Transverse colon (tissue), 4 donors: ENCODE measurements at regions of chr2 and their contacts with region 1.

Region 1: DNA sequence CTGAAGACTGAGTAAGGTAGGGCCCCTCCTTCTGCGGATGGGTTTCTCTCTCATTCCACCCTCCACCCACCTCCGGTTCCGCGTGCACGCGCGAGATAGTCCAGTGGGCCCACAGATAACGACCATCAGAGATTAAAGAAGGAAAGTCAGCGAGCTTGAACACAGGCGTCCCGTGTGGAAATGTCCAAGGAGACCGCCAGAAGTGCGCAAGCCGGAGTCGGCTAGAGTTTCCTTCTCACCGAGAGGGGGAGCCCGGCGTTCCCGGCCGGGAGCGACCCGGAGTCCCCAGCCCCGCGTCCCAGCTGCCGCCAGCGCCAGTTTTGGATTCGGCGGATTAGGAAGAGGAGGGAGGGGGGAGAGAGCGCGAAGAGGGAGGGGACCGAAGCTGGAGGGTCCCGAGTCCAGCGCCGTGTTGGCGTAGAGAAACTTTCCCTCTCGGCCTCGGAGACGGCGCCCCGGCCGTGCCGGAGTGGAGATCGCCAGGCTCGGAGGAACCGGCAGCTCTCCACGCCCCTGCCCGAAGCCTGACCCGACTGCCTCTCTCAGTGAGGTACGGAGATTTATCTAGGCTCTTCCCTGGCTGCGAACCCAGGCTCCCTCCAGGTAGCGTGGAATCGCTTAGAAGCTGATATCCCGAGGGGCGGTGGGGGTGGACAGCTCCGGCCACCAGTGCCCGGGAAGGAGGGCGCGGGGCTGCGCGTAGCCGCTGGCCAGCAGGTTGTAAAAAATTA is at the start of gene GULP1:
- DNase-seq: peak; percentile 76
- H3K4me3 ChIP-seq: peak within 1 kb of the TSS; percentile 47 to 75 (median 66)
- H3K27ac ChIP-seq: peak within 1 kb of the TSS; percentile 84 to 96 (median 88)
- H3K4me1 ChIP-seq: peaks cover 5 to 27% (median 15%) of the 10 kb centered on the region in 4 donors
- H3K27me3 ChIP-seq: no peaks in the 10 kb centered on the region
- CTCF ChIP-seq: peak; percentile 58 to 71 (median 68)
- EP300 ChIP-seq: no peak
- POLR2A ChIP-seq: peak; percentile 12
- total RNA-seq, gene GULP1: 6.4 to 44.1 (median 25.4) TPM

Region 2: DNA sequence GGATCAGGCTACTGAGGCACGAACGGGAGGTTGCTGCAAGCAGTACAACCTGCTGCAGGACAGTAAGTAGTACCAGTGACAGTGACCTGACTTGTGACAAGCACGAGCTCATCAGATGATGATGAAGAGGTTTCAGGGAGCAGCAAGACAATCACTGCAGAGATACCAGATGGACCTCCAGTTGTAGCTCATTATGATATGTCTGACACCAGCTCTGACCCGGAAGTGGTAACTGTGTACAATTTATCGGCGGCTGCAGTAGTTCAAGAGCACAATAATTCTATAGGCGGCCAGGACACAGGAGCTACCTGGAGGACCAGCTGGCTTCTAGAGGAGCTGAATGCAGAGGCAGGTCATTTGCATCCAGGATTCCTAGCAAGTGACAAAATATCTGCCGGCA is 64.1 kb before region 1 on chr2:
- in situ Hi-C with region 1: no loop called
- intact Hi-C with region 1: no loop called
- DNase-seq: no peak
- H3K4me3 ChIP-seq: no peak overlapping the region
- H3K27ac ChIP-seq: no peak overlapping the region
- H3K4me1 ChIP-seq: no peaks in the 10 kb centered on the region
- H3K27me3 ChIP-seq: no peaks in the 10 kb centered on the region
- CTCF ChIP-seq: no peak
- EP300 ChIP-seq: no peak
- POLR2A ChIP-seq: no peak

Region 3: GRCh38 chr2:188506843-188507242 is 215.1 kb after region 1 on chr2:
- in situ Hi-C with region 1: no loop called
- intact Hi-C with region 1: loop called (anchors 5 kb)
- DNase-seq: no peak
- H3K4me3 ChIP-seq: no peak overlapping the region
- H3K27ac ChIP-seq: no peak overlapping the region
- H3K4me1 ChIP-seq: no peaks in the 10 kb centered on the region
- H3K27me3 ChIP-seq: no peaks in the 10 kb centered on the region
- CTCF ChIP-seq: no peak
- EP300 ChIP-seq: no peak
- POLR2A ChIP-seq: no peak